ENCODE measurements at regions of chrX and their contacts with region 1.

Region 1: DNA sequence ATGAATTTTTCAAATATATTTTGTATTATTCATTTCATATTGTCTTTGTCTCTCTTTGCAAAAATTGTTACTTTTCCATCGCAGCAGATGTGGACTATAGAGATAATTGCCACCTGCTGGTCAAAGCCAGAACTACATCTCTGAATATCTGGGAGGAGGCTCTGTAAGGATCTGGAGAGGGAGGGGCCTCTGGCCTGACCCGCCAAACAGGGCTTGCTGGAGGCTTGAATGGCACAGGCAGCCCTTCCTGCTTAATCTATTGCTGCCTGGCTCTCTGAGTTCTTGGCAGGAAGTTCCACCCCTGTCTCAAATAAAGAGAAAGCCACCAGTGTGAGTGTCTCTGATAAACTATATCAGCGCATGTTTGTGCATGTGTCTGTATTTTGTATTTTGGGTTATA is 132.4 kb downstream of the ZMAT1 start:
- DNase-seq: peak; percentile 95
- ATAC-seq: peak; percentile 100
- H3K4me3 ChIP-seq: peak overlapping the region; percentile 33; the same call in 1 of the 2 replicates
- H3K27ac ChIP-seq: no peak overlapping the region
- H3K4me1 ChIP-seq: no peaks in the 10 kb centered on the region
- H3K27me3 ChIP-seq: 0 out of 2 replicates have a peak, but pooled peaks cover 4% of the 10 kb centered on the region
- CTCF ChIP-seq: peak; percentile 64

Region 2: DNA sequence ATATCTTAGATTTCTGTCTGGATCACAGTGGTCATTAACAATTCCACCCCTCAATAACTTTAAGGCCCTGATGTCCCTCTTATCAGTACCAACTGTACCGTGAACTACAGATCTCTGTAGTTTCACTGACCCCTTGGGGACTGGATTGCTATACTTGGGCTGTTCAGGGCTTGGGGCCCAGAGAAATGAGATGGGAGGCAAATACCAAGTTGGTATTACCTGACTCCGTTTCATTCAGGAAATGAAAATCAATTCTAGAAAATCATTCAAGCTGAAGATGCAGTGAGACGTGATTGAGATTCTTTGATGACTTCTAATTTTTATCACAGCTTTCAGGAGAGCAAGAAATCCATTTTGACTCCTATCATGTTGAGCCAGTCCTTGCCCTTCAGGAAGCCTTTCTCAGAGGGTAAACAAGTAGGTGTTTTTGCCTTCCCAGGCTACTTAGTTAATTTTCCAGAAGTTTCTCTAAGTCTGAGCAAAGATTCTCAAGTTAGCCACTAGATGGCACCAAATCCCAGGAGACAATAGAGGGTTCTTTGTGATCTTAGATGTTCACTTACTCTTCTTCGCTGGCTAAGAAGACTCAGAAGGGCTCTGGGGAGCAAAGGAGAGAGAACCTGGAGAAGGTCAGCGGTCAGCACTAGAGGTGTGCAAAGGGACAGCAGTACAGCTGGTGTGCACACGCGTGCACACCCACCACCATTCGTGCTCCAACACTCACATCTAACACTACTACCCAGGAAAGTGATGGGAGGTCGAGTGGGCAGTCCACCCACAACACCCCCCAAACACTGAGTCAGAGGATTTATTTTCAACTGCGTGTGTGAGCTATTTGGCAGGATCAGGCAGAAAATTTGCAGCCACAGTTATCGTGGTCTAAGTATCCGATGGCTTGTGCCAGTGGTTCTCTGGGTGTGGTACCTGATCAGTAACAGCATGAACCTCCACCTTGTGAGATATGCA is 383.9 kb before region 1 on chrX:
- CTCF ChIA-PET with region 1: no interaction called
- POLR2A ChIA-PET with region 1: no interaction called
- intact Hi-C with region 1: loop called (anchors 2 kb)
- DNase-seq: peak; percentile 69
- ATAC-seq: peak; percentile 71
- H3K4me3 ChIP-seq: no peak overlapping the region
- H3K27ac ChIP-seq: no peak overlapping the region
- H3K4me1 ChIP-seq: peaks cover 5% of the 10 kb centered on the region; the same call in 1 of the 2 replicates
- H3K27me3 ChIP-seq: no peaks in the 10 kb centered on the region
- CTCF ChIP-seq: peak; percentile 75

Region 3: GRCh38 chrX:101462892-101463291 is 336.5 kb before region 1 on chrX:
- CTCF ChIA-PET with region 1: no interaction called
- POLR2A ChIA-PET with region 1: no interaction called
- intact Hi-C with region 1: loop called (anchors 5 kb)
- DNase-seq: peak; percentile 63
- ATAC-seq: peak; percentile 62
- H3K4me3 ChIP-seq: no peak overlapping the region
- H3K27ac ChIP-seq: no peak overlapping the region
- H3K4me1 ChIP-seq: no peaks in the 10 kb centered on the region
- H3K27me3 ChIP-seq: peaks cover 4% of the 10 kb centered on the region; the same call in 1 of the 2 replicates
- CTCF ChIP-seq: peak; percentile 56

Region 4: GRCh38 chrX:101595739-101596419 is 203.5 kb before region 1 on chrX:
- CTCF ChIA-PET with region 1: no interaction called
- POLR2A ChIA-PET with region 1: no interaction called
- intact Hi-C with region 1: loop called (anchors 5 kb)
- DNase-seq: peak; percentile 70
- ATAC-seq: peak; percentile 96
- H3K4me3 ChIP-seq: no peak overlapping the region
- H3K27ac ChIP-seq: no peak overlapping the region
- H3K4me1 ChIP-seq: no peaks in the 10 kb centered on the region
- H3K27me3 ChIP-seq: 0 out of 2 replicates have a peak, but pooled peaks cover 4% of the 10 kb centered on the region
- CTCF ChIP-seq: peak; percentile 81

Region 5: DNA sequence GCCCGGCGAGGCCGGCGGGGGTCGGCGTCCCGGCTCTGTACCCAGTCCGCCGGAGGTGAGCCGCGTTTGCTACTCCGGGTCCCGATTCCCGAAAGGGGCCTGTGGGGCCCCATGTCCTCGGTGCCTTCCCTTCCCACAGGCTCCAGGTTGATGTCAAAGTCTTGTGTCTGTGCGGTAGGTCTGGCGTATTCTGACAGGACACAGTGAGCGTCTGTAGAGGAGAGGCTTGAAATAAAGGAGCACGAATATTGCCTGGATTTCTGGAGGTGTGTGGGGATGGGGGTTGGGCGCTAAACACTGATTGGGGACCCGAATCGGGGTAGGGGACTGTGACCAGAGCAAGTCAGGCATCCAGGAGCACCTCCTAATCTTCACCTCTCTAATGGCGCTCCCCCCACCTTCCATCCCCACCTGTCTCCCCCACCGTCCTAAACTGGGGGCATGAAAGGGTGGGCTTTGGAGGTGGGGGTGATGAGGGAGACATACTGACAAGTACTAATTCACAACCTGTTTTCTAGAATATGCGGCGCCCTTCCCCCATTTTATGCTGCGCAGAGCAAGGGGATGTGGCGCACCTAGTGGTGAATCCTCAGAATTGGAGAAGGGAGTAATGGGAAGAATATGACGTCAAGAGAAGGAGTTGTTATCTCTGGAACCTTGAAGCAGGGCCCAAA is 913.7 kb after region 1 on chrX:
- CTCF ChIA-PET with region 1: no interaction called
- POLR2A ChIA-PET with region 1: no interaction called
- intact Hi-C with region 1: loop called (anchors 5 kb)
- DNase-seq: peak; percentile 66
- ATAC-seq: peak; percentile 67
- H3K4me3 ChIP-seq: peak overlapping the region; percentile 84
- H3K27ac ChIP-seq: no peak overlapping the region
- H3K4me1 ChIP-seq: no peaks in the 10 kb centered on the region
- H3K27me3 ChIP-seq: no peaks in the 10 kb centered on the region
- CTCF ChIP-seq: peak; percentile 68

Measured in PC-3 (cell line).